PC-3 (cell line): ENCODE measurements at regions of chr17 and their contacts with region 1.

Region 1: GRCh38 chr17:50114849-50115357 is 15.1 kb downstream of the SAMD14 start:
- DNase-seq: peak; percentile 84
- ATAC-seq: peak; percentile 35
- H3K4me3 ChIP-seq: no peak overlapping the region
- H3K27ac ChIP-seq: no peak overlapping the region
- H3K4me1 ChIP-seq: peaks cover 5% of the 10 kb centered on the region; the same call in 1 of the 2 replicates
- H3K27me3 ChIP-seq: peaks cover 5% of the 10 kb centered on the region; the same call in 1 of the 2 replicates
- CTCF ChIP-seq: peak; percentile 96

Region 2: DNA sequence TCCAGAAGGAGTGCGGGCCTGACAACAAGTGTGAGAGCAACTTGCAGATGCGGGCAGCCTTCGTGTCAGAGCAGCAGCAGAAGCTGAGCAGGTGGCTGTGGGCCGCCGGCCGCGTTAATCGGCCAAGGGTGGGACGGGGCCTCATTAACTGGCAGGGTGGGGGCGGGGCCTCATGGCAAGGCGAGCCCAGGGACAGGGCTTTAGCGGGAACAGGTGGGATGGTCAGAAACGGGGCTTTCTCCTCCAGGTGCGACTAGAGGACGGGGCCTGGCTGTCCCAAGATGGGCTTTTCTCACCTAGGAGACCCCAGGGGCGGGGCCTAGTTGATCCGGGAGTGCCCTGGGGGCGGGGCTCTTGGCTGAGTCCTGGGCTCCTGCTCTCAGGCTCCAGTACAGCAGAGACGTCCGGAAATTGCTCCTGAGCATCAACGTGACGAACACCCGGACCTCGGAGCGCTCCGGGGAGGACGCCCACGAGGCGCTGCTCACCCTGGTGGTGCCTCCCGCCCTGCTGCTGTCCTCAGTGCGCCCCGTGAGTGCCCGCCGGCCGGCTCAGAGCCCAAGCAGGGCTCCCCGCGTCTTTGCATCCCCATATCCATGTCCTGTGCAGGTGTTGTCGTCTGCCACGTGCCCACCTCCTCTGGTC is 38.2 kb before region 1 on chr17:
- CTCF ChIA-PET with region 1: no interaction called
- POLR2A ChIA-PET with region 1: no interaction called
- intact Hi-C with region 1: no loop called
- DNase-seq: no peak
- ATAC-seq: no peak
- H3K4me3 ChIP-seq: no peak overlapping the region
- H3K27ac ChIP-seq: no peak overlapping the region
- H3K4me1 ChIP-seq: no peaks in the 10 kb centered on the region
- H3K27me3 ChIP-seq: no peaks in the 10 kb centered on the region
- CTCF ChIP-seq: no peak

Region 3: GRCh38 chr17:50139950-50140871 is 25.3 kb after region 1 on chr17:
- CTCF ChIA-PET with region 1: interaction called, 20 read pairs
- POLR2A ChIA-PET with region 1: no interaction called
- intact Hi-C with region 1: no loop called
- DNase-seq: peak; percentile 68
- ATAC-seq: peak; percentile 84
- H3K4me3 ChIP-seq: no peak overlapping the region
- H3K27ac ChIP-seq: no peak overlapping the region
- H3K4me1 ChIP-seq: no peaks in the 10 kb centered on the region
- H3K27me3 ChIP-seq: no peaks in the 10 kb centered on the region
- CTCF ChIP-seq: peak; percentile 96

Region 4: DNA sequence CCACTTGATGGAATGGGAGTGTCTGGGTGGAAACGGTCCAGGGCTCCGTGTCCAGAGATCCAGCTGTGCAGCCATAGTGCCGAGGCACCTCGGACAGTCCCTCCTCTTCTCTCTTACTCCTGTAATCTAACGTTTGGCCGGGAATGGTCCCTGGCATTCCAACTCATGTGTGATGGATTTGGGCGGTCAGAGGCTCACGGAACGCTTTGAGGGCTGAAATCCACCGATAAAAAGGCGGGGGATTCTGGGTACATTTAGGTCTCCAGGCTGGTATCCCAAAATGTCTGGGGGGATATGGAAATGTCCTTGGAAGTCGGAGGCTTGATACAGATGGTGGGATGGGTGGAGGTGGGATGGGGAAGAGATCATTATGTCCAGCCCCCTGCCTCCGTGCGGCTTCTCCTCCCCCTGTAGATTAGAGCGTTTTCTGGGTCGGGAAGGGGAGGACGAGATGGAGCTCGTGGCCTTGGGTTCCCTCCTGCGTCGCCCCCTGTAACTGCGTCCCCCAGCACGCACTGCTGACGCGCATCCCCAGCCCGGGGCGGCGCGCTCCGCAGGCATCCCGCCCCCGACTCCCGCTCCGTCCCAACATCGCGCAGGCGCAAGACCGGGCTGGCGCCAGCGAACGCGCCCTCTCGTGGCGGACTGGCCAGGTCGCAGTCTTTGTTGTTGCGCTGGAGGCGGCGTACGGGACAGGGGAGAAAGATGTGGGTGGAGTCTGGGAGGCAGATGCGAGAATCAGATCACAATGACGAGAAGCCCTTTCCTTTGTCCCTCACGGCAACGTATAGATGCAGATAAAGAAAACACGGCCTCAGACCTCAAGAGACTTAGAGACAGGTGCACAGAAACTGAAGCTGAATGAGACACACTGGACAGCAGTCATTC is 46.4 kb after region 1 on chr17:
- CTCF ChIA-PET with region 1: interaction called, 3 read pairs
- POLR2A ChIA-PET with region 1: no interaction called
- intact Hi-C with region 1: loop called (anchors 2 kb)
- DNase-seq: peak; percentile 95
- ATAC-seq: peak; percentile 98
- H3K4me3 ChIP-seq: peak overlapping the region; percentile 70
- H3K27ac ChIP-seq: no peak overlapping the region
- H3K4me1 ChIP-seq: peaks cover 11% of the 10 kb centered on the region
- H3K27me3 ChIP-seq: no peaks in the 10 kb centered on the region
- CTCF ChIP-seq: peak; percentile 95